Heart right ventricle (tissue), 16 donors: ENCODE measurements at regions of chr7 and their contacts with region 1.

Region 1: GRCh38 chr7:14197280-14197679 is 207.8 kb upstream of the ETV1 start:
- DNase-seq: peak in 1 of 2 donors; percentile 63
- ATAC-seq: peak in 6 of 8 donors; percentile 48 to 91 (median 66)
- H3K4me3 ChIP-seq: peak overlapping the region in 3 of 10 donors; percentile 1 to 19 (median 5)
- H3K27ac ChIP-seq: peak overlapping the region in 8 of 10 donors; percentile 28 to 59 (median 41)
- H3K4me1 ChIP-seq: peaks cover 2 to 27% (median 18%) of the 10 kb centered on the region in 9 donors
- H3K27me3 ChIP-seq: no peaks in the 10 kb centered on the region
- CTCF ChIP-seq: no peak

Region 2: DNA sequence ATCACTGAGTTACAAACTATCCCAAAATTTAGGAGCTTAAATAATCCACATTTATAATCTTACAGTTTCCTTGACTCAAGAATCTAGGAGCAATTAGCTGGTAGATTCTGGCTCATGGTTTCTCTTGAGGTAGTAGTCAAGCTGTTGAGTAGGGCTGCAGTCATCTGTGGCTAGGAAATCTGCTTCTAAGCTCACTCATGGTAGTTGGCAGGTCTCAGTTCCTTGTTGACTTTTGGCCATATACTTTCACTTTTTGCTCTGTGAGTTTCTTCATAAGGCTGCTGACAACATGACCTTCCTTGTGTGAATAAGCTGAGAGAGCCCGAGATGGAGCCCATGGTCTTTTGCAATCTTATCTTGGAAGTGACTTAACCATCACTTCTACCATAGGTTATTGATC is 197.0 kb before region 1 on chr7:
- intact Hi-C with region 1: no loop called
- DNase-seq: no peak
- ATAC-seq: no peak
- H3K4me3 ChIP-seq: no peak overlapping the region
- H3K27ac ChIP-seq: no peak overlapping the region
- H3K4me1 ChIP-seq: peaks cover 0 to 3% (median 0%) of the 10 kb centered on the region in 9 donors
- H3K27me3 ChIP-seq: no peaks in the 10 kb centered on the region
- CTCF ChIP-seq: no peak

Region 3: DNA sequence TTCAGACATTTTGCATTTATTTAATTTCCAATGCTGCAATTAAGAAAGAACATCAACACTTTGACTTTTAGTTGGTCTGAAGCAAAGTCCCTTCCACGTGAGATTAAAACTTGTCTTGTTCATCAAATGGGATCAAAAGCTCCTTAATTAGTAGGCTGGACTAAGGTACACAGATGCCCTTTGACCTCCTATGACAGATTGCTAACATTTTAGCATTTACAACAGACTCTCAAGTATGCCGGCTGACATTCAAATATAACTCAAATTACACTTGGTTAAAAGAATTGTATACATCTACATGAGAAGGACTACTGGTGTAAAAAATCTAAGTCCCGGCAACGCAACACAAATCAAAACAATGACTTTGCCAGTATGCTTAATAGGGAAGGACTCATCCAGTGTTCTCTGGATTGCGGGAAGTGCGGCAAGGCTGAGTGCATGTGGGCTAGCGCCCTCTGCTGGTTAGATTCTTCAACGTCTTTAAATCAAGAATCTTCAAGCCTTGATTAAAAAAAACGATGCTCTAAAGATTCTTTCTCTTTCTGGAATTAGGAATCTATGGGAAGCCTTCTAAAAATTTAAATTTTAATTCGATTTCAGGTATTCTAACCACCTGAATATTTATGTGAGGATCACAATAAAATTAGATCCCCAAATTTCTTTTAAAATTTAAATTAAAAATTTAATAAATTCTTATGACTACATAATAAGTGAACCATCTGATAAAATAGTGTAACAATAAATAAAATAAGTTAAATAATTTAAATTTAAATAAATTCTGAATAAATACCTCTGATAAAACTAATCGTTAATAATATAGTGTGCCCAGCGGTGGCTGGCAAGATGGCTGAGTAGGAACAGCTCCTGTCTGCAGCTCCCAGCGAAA is 260.5 kb after region 1 on chr7:
- intact Hi-C with region 1: loop called in 1 of 10 experiments (anchors 10 kb)
- DNase-seq: peak; percentile 41 to 73
- ATAC-seq: peak in 7 of 8 donors; percentile 55 to 87 (median 79)
- H3K4me3 ChIP-seq: peak overlapping the region in 4 of 10 donors; percentile 13 to 26 (median 18)
- H3K27ac ChIP-seq: peak overlapping the region in 1 of 10 donors; percentile 37
- H3K4me1 ChIP-seq: peaks cover 0 to 7% (median 0%) of the 10 kb centered on the region in 9 donors
- H3K27me3 ChIP-seq: no peaks in the 10 kb centered on the region
- CTCF ChIP-seq: peak; percentile 80 to 93 (median 89)

Region 4: DNA sequence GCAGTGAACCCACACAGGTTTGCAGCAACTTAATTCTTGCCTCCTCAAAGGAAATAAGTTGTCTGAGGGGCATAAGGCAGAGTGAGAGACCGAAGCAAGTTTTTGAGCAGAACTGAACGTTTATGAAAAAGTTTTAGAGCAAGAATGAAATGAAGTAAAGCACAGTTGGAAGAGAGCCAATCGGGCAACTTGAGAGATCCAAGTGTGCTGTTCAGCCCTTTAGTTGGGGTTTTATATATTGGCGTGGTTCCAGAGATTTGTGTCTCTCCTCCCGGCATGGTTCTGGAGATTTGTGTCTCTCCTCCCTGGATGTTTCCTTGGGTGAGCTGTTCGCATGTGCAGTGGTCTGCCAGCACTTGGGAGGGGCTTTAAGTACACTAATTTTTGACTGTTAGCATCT is 846.7 kb after region 1 on chr7:
- intact Hi-C with region 1: no loop called
- DNase-seq: no peak
- ATAC-seq: no peak
- H3K4me3 ChIP-seq: no peak overlapping the region
- H3K27ac ChIP-seq: no peak overlapping the region
- H3K4me1 ChIP-seq: no peaks in the 10 kb centered on the region
- H3K27me3 ChIP-seq: no peaks in the 10 kb centered on the region
- CTCF ChIP-seq: no peak